K562 (cell line): ENCODE measurements at regions of chr10 and their contacts with region 1.

Region 1: GRCh38 chr10:3785257-3785850 is 345 bp upstream of the KLF6 start:
- DNase-seq: peak; percentile 99 to 100 (median 100)
- ATAC-seq: peak; percentile 84
- H3K4me3 ChIP-seq: peak overlapping the region; percentile 92
- H3K27ac ChIP-seq: peak overlapping the region; percentile 97
- H3K4me1 ChIP-seq: peaks cover 20 to 34% of the 10 kb centered on the region in 2 experiments; a peak in 4 of 5 replicates
- H3K27me3 ChIP-seq: no peaks in the 10 kb centered on the region
- CTCF ChIP-seq: no peak
- EP300 ChIP-seq: peak; percentile 14; the same call in 1 of the 2 replicates
- POLR2A ChIP-seq: peak; percentile 88
- RAD21 ChIP-seq: peak in 1 of 2 experiments; percentile 6; a peak in 2 of 4 replicates

Region 2: GRCh38 chr10:3761021-3761686 is 24.2 kb before region 1 on chr10:
- CTCF ChIA-PET with region 1: interaction called, 4 read pairs
- POLR2A ChIA-PET with region 1: interaction called, 17 read pairs
- in situ Hi-C with region 1: no loop called
- intact Hi-C with region 1: no loop called
- DNase-seq: no peak
- ATAC-seq: no peak
- H3K4me3 ChIP-seq: no peak overlapping the region
- H3K27ac ChIP-seq: no peak overlapping the region
- H3K4me1 ChIP-seq: peaks cover 14 to 42% of the 10 kb centered on the region in 2 experiments
- H3K27me3 ChIP-seq: peaks cover 0 to 5% of the 10 kb centered on the region in 2 experiments; a peak in 1 of 5 replicates
- CTCF ChIP-seq: no peak
- EP300 ChIP-seq: no peak
- POLR2A ChIP-seq: no peak
- RAD21 ChIP-seq: no peak

Region 3: GRCh38 chr10:3828404-3829155 is 43.2 kb after region 1 on chr10:
- CTCF ChIA-PET with region 1: no interaction called
- POLR2A ChIA-PET with region 1: interaction called, 17 read pairs
- in situ Hi-C with region 1: no loop called
- intact Hi-C with region 1: no loop called
- DNase-seq: peak; percentile 32 to 70 (median 42)
- ATAC-seq: peak; percentile 60
- H3K4me3 ChIP-seq: peak overlapping the region; percentile 19; the same call in 1 of the 2 replicates
- H3K27ac ChIP-seq: peak overlapping the region; percentile 72
- H3K4me1 ChIP-seq: peaks cover 19 to 27% of the 10 kb centered on the region in 2 experiments
- H3K27me3 ChIP-seq: no peaks in the 10 kb centered on the region
- CTCF ChIP-seq: no peak
- EP300 ChIP-seq: no peak
- POLR2A ChIP-seq: no peak
- RAD21 ChIP-seq: no peak; a peak in 1 of 4 replicates

Region 4: DNA sequence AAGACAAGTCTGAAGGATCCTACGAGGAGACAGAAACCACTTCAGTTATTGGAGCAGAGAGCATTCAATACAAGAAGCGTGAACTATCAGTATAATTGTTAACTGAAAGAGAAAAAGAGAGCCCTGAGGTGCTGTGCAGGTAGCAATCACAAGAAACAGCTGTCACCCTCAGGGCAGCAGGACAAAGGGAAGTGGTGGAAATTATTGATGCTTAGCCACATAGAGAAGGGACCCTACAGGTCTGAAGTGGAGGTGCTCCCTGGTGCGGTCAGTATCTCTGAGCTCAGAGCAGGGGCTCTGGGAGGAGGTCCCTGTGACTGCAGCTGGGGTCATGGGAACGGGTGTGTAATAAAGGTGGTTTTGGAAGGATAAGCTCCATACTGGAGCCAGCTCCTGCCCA is 97.5 kb after region 1 on chr10:
- CTCF ChIA-PET with region 1: no interaction called
- POLR2A ChIA-PET with region 1: interaction called, 10 read pairs
- in situ Hi-C with region 1: no loop called
- intact Hi-C with region 1: no loop called
- DNase-seq: no peak
- ATAC-seq: peak; percentile 53
- H3K4me3 ChIP-seq: no peak overlapping the region
- H3K27ac ChIP-seq: no peak overlapping the region
- H3K4me1 ChIP-seq: peaks cover 2 to 7% of the 10 kb centered on the region in 2 experiments; a peak in 4 of 5 replicates
- H3K27me3 ChIP-seq: no peaks in the 10 kb centered on the region
- CTCF ChIP-seq: no peak
- EP300 ChIP-seq: no peak
- POLR2A ChIP-seq: no peak
- RAD21 ChIP-seq: no peak

Region 5: DNA sequence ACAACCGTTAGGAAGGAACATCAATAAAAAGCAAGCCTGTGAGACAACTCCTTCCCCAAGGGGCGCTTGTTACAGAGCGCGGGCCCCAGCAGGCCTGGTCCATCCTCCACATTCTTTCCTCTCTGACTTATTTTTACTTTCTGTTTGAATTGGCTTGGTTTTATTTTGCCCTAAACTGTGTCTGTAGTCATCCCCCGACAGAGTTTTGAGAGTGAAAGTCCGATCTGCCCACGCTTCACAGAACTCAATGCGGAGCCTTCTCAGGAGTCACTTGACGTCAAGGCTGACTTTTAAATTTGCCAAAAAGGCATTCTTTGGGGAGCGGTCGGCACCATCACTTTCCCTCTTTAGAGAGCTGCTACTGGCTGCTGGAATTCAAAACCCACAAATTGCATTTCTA is 149.8 kb after region 1 on chr10:
- CTCF ChIA-PET with region 1: no interaction called
- POLR2A ChIA-PET with region 1: interaction called, 13 read pairs
- in situ Hi-C with region 1: no loop called
- intact Hi-C with region 1: no loop called
- DNase-seq: no peak
- ATAC-seq: peak; percentile 46; the same call in 2 of the 3 replicates
- H3K4me3 ChIP-seq: no peak overlapping the region
- H3K27ac ChIP-seq: no peak overlapping the region
- H3K4me1 ChIP-seq: peaks cover 3 to 16% of the 10 kb centered on the region in 2 experiments; a peak in 4 of 5 replicates
- H3K27me3 ChIP-seq: no peaks in the 10 kb centered on the region
- CTCF ChIP-seq: no peak
- EP300 ChIP-seq: no peak
- POLR2A ChIP-seq: no peak
- RAD21 ChIP-seq: no peak

Region 6: DNA sequence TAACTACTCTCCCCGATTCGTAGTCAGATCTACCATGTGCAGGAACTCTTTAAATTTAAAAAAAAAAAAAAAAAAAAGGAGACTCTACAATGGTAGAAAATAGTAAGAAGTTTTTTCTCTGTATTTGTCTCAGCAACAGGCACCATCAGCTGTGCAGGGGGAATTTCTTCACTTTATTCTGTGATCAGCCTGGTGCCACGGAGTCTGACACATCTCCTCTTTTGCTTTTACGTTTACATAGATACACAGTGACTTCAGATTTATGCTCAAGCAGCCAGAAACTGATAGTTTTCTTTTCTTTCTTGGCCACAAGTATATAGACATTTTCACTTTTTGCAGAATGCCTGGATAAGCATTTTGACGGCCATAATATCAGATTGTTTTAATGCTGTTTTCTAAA is 850.0 kb after region 1 on chr10:
- CTCF ChIA-PET with region 1: no interaction called
- POLR2A ChIA-PET with region 1: no interaction called
- in situ Hi-C with region 1: no loop called
- intact Hi-C with region 1: no loop called
- DNase-seq: no peak
- ATAC-seq: no peak
- H3K4me3 ChIP-seq: no peak overlapping the region
- H3K27ac ChIP-seq: no peak overlapping the region
- H3K4me1 ChIP-seq: no peaks in the 10 kb centered on the region
- H3K27me3 ChIP-seq: peaks cover 2 to 16% of the 10 kb centered on the region in 2 experiments; a peak in 3 of 5 replicates
- CTCF ChIP-seq: no peak
- EP300 ChIP-seq: no peak
- POLR2A ChIP-seq: no peak
- RAD21 ChIP-seq: no peak